ENCODE measurements at regions of chr3 and their contacts with region 1.

Region 1: GRCh38 chr3:128969993-128970739 is 23.7 kb downstream of the CFAP92 start:
- DNase-seq: peak; percentile 78
- H3K4me3 Mint-ChIP-seq: no peak overlapping the region
- H3K27ac Mint-ChIP-seq: no peak overlapping the region
- H3K4me1 Mint-ChIP-seq: no peaks in the 10 kb centered on the region
- H3K27me3 Mint-ChIP-seq: no peaks in the 10 kb centered on the region

Region 2: GRCh38 chr3:128603811-128604775 is 366.1 kb before region 1 on chr3:
- CTCF ChIA-PET with region 1: no interaction called
- intact Hi-C with region 1: no loop called
- DNase-seq: no peak
- H3K4me3 Mint-ChIP-seq: no peak overlapping the region
- H3K27ac Mint-ChIP-seq: no peak overlapping the region
- H3K4me1 Mint-ChIP-seq: peaks cover 2% of the 10 kb centered on the region
- H3K27me3 Mint-ChIP-seq: peaks cover 2% of the 10 kb centered on the region

Region 3: DNA sequence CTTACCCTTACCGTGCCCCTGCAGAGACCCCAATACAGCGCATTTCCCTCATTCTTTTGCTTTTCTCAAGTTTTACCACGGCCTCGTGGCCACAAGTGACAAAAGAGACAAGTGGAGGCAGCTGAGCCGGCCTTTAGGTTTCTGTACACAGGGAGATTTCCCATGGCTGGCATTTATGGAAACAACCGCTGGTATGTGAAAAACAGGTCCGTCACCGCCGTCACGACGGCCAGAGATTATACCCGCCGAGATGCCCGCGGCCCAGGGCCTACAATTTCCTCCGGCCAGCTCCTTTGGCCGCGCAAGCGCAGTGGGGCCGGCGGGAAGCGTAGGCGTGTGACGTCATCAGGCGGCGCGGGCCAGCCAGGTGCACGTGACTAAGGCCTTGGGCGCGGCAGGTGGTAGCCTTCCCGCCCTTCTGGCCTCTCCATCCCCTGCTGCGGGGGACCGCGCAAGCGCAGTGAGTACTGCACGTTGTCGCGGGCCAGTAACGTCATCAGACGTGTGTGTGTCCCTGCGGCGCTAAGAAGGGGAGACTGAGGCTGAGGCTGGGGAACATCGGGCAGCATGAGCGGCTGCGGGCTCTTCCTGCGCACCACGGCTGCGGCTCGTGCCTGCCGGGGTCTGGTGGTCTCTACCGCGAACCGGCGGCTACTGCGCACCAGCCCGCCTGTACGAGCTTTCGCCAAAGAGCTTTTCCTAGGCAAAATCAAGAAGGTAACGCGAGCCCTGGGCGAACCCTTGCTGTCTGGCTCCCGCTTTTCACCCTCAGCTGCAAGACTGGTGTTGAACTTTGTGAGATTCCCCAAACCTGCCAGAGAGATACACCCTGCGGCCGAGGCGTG is 90.8 kb before region 1 on chr3 and contains the start of gene ACAD9:
- CTCF ChIA-PET with region 1: interaction called, 25 read pairs
- intact Hi-C with region 1: no loop called
- DNase-seq: peak; percentile 96
- H3K4me3 Mint-ChIP-seq: peak within 1 kb of the TSS; percentile 84
- H3K27ac Mint-ChIP-seq: peak within 1 kb of the TSS; percentile 90
- H3K4me1 Mint-ChIP-seq: peaks cover 67% of the 10 kb centered on the region
- H3K27me3 Mint-ChIP-seq: no peaks in the 10 kb centered on the region
- total RNA-seq, gene ACAD9: 37.0 to 40.6 TPM

Region 4: GRCh38 chr3:129003578-129004160 is 33.5 kb after region 1 on chr3:
- CTCF ChIA-PET with region 1: interaction called, 25 read pairs
- intact Hi-C with region 1: no loop called
- DNase-seq: peak; percentile 69
- H3K4me3 Mint-ChIP-seq: peak overlapping the region; percentile 53
- H3K27ac Mint-ChIP-seq: no peak overlapping the region
- H3K4me1 Mint-ChIP-seq: peaks cover 36% of the 10 kb centered on the region
- H3K27me3 Mint-ChIP-seq: peaks cover 21% of the 10 kb centered on the region

Region 5: GRCh38 chr3:129026728-129027543 is 56.8 kb after region 1 on chr3:
- CTCF ChIA-PET with region 1: interaction called, 29 read pairs
- intact Hi-C with region 1: no loop called
- DNase-seq: peak; percentile 96
- H3K4me3 Mint-ChIP-seq: peak overlapping the region; percentile 77
- H3K27ac Mint-ChIP-seq: peak overlapping the region; percentile 82
- H3K4me1 Mint-ChIP-seq: peaks cover 7% of the 10 kb centered on the region
- H3K27me3 Mint-ChIP-seq: no peaks in the 10 kb centered on the region

Region 6: GRCh38 chr3:129160891-129161859 is 191.0 kb after region 1 on chr3 and contains the start of gene ISY1:
- CTCF ChIA-PET with region 1: interaction called, 15 read pairs
- intact Hi-C with region 1: loop called (anchors 1 kb)
- DNase-seq: peak; percentile 91
- H3K4me3 Mint-ChIP-seq: peak within 1 kb of the TSS; percentile 87
- H3K27ac Mint-ChIP-seq: peak within 1 kb of the TSS; percentile 99
- H3K4me1 Mint-ChIP-seq: peaks cover 31% of the 10 kb centered on the region
- H3K27me3 Mint-ChIP-seq: no peaks in the 10 kb centered on the region
- total RNA-seq, gene ISY1: 56.8 to 65.4 TPM

Region 7: GRCh38 chr3:129249276-129250065 is 279.3 kb after region 1 on chr3 and contains the start of gene COPG1:
- CTCF ChIA-PET with region 1: interaction called, 90 read pairs
- intact Hi-C with region 1: loop called (anchors 1 kb)
- DNase-seq: peak; percentile 86
- H3K4me3 Mint-ChIP-seq: peak within 1 kb of the TSS; percentile 95
- H3K27ac Mint-ChIP-seq: peak within 1 kb of the TSS; percentile 89
- H3K4me1 Mint-ChIP-seq: peaks cover 33% of the 10 kb centered on the region
- H3K27me3 Mint-ChIP-seq: no peaks in the 10 kb centered on the region
- total RNA-seq, gene COPG1: 125 to 128 TPM

Region 8: DNA sequence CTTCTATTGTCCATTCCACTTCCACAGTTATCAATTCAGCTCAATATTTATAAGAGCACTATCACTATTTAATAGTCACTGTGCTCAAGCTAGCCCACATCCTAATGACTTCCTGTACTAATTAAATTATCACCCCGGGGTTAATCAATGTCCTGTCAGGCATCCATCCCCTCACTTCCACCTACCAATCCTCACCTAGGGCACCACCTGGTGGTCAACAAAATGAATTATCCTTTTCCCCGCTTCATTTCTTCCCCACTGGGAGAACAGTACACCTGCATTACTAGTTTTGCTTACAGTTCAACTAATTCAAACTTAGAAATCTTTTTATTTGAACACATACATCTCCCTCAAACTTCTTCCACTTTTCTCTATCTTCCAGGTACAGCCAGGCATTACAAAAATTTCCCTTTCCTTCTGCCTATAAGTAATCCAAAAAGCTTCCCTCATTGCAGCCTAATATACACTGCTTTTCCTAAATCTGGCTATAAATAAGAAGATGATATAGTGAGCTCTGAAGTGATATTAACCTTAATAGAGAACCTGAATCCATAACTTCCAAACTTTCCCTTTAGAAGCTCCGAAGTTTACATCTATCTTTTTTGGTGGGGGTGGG is 854.9 kb after region 1 on chr3:
- CTCF ChIA-PET with region 1: no interaction called
- intact Hi-C with region 1: loop called (anchors 10 kb)
- DNase-seq: peak; percentile 63
- H3K4me3 Mint-ChIP-seq: no peak overlapping the region
- H3K27ac Mint-ChIP-seq: no peak overlapping the region
- H3K4me1 Mint-ChIP-seq: peaks cover 19% of the 10 kb centered on the region
- H3K27me3 Mint-ChIP-seq: no peaks in the 10 kb centered on the region